ENCODE measurements at regions of chr2 and their contacts with region 1.

Region 1: GRCh38 chr2:176132205-176133171 is 3.0 kb downstream of the HOXD8 start:
- DNase-seq: no peak
- H3K4me3 Mint-ChIP-seq: peak overlapping the region; percentile 74
- H3K27ac Mint-ChIP-seq: peak overlapping the region; percentile 68
- H3K4me1 Mint-ChIP-seq: peaks cover 27% of the 10 kb centered on the region
- H3K27me3 Mint-ChIP-seq: peaks cover 79% of the 10 kb centered on the region

Region 2: GRCh38 chr2:176147800-176148496 is 15.5 kb after region 1 on chr2:
- intact Hi-C with region 1: loop called (anchors 2 kb)
- DNase-seq: no peak
- H3K4me3 Mint-ChIP-seq: no peak overlapping the region
- H3K27ac Mint-ChIP-seq: no peak overlapping the region
- H3K4me1 Mint-ChIP-seq: no peaks in the 10 kb centered on the region
- H3K27me3 Mint-ChIP-seq: peaks cover 79% of the 10 kb centered on the region

Region 3: DNA sequence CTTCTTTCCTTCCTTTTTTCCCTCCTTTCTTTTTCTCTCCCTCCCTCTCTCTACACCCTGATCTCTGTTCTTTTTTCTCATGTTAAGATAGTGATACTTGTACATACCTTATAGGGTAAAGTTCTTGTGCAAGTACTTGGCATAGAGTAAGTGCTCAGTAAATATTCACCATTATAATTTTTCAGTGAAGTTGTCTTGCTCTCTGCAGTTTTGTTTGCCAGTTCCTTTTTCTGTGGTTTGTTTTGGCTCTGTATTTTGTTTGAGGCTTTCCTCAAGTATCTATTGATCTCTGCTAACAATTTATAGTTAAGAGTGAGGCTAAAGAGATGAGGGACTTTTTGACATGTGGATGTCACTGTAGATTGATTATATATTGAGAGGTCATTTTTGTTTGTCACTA is 184.7 kb after region 1 on chr2:
- intact Hi-C with region 1: no loop called
- DNase-seq: no peak
- H3K4me3 Mint-ChIP-seq: no peak overlapping the region
- H3K27ac Mint-ChIP-seq: peak overlapping the region; percentile 45
- H3K4me1 Mint-ChIP-seq: peaks cover 4% of the 10 kb centered on the region
- H3K27me3 Mint-ChIP-seq: no peaks in the 10 kb centered on the region